Tibial artery (tissue), 4 donors: ENCODE measurements at regions of chr19 and their contacts with region 1.

Region 1: GRCh38 chr19:47707135-47707925 is 5.9 kb upstream of the EHD2 start:
- DNase-seq: peak; percentile 60 to 79
- H3K4me3 ChIP-seq: no peak overlapping the region
- H3K27ac ChIP-seq: no peak overlapping the region
- H3K4me1 ChIP-seq: no peaks in the 10 kb centered on the region
- H3K27me3 ChIP-seq: no peaks in the 10 kb centered on the region
- CTCF ChIP-seq: peak; percentile 70 to 73

Region 2: DNA sequence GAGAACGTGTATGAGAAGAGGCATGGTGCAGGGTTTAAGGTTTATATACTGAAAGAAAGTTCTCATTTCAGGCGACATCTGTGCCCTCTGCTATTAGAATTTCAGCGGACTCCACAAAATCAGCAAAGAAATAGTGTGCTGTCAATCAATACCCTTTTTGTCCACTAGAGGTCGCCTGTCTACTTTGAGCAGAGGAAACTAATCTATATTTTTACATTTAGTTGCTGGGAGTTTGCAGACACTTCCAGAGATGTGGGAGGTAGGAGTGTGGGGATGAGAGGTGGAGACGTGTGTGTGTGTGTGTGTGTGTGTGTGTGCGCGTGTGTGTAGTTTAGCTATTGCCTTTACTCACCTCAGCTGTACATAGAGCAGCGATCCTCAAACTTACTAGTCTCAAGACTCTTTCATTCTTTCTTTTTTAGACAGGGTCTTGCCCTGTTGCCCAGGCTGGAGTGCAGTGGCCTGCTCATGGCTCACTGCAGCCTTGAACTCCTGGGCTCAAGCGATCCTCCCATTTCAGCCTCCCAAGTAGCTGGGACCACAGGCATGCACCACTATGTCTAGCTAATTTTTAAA is 422.9 kb before region 1 on chr19:
- intact Hi-C with region 1: loop called (anchors 10 kb)
- DNase-seq: no peak
- H3K4me3 ChIP-seq: no peak overlapping the region
- H3K27ac ChIP-seq: no peak overlapping the region
- H3K4me1 ChIP-seq: peaks cover 0 to 47% (median 15%) of the 10 kb centered on the region in 4 donors
- H3K27me3 ChIP-seq: no peaks in the 10 kb centered on the region
- CTCF ChIP-seq: peak; percentile 78 to 92

Region 3: DNA sequence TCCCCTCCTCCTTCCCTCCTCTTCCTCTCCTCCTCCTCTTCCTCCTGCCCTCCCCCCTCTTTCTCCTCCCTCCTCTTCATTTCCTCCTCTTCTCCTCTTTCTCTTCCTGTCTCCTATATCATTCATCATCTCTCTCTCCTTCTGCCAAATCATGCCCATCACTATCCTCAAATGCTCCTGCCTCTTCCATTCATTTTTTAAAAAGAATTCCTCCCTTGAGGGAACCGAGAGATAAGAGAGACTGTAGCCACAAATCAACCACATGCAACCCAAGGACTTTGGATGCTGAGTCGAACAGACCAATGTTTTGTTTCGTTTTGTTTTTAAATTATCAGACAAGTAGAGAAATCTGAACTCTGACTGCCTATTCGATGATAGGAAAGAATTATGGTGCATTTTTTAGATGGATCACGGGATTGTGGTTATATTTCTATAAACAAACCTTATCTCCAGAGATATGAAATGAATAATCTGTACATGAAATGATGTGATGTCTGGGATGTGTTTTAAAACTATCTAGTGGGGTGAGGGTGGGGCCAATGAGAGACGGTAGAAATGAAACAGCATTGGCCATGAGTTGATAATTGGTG is 124.9 kb before region 1 on chr19:
- intact Hi-C with region 1: no loop called
- DNase-seq: no peak
- H3K4me3 ChIP-seq: no peak overlapping the region
- H3K27ac ChIP-seq: no peak overlapping the region
- H3K4me1 ChIP-seq: no peaks in the 10 kb centered on the region
- H3K27me3 ChIP-seq: no peaks in the 10 kb centered on the region
- CTCF ChIP-seq: no peak

Region 4: GRCh38 chr19:47819858-47820257 is 112.5 kb after region 1 on chr19:
- intact Hi-C with region 1: no loop called
- DNase-seq: no peak
- H3K4me3 ChIP-seq: no peak overlapping the region
- H3K27ac ChIP-seq: no peak overlapping the region
- H3K4me1 ChIP-seq: no peaks in the 10 kb centered on the region
- H3K27me3 ChIP-seq: peaks cover 0 to 53% of the 10 kb centered on the region in 2 donors
- CTCF ChIP-seq: no peak